Lower leg skin (tissue), 4 donors: ENCODE measurements at regions of chr1 and their contacts with region 1.

Region 1: GRCh38 chr1:182397771-182398393 is 2.6 kb downstream of the TEDDM1 start:
- DNase-seq: no peak
- H3K4me3 ChIP-seq: no peak overlapping the region
- CTCF ChIP-seq: no peak
- POLR2A ChIP-seq: no peak

Region 2: DNA sequence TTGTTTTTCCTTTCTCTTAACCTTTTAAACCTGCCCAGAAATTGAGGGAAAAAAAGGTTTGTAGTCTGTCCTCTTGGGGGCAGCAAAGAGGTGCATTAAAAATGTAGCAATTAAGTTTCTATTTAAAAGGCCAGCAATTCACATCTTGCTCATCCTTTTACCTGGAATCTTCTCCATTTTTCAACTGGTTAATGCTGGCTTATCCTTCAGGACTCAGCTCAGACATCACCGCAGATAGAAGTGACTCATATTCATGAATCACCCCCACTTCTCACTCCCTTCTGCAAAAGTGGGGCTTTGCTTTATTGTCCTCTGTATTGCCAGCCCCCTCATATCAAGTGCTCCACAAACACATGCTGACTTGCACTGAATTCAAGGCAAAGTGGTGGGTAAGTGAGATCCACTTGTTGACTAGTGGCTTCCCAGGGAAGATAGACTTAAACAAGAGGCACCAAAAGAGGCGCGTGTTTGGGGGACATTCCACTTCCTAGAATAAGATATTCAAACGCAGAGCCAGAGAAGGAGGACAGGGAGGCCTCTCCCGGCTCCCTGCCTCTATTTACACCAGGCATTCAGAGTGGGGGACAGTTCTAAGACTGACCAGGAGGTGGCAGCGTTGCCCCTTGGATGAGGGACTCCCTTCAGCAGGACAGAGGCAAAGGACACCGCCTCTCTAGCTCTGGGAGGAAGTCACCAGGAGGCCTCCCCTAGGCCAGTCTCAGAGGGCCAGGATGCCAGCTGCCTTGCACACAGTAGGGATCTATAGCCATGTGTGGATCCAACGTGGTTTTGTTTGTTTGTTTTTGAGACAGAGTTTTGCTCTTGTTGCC is 313.2 kb before region 1 on chr1:
- intact Hi-C with region 1: loop called (anchors 2 kb)
- DNase-seq: peak; percentile 92 to 98
- H3K4me3 ChIP-seq: no peak overlapping the region
- CTCF ChIP-seq: peak in 2 of 3 donors; percentile 53 to 89
- POLR2A ChIP-seq: no peak

Region 3: DNA sequence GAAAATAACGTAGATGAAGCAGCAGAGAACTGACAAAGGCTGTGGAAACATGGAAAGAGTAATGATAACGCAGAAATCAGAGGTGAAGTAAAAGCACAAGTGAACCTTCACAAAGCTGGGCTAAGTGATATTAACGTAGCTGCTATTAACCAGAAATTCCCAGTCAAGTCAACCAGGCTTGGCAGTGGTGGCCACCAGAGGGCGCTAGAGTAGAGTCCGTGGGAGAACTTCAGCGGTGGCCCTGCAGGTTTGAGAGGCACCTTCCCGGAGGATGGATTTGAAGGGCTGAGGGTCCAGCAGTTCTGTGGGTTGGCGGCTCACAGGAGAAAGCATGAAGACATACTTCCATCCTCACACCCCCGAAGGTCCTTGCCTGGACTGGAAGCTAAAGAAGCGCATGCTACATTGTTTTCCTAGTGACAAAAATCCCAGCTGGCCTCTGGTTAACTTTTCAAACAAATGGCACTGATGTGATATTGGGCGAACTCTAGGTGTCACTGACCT is 254.7 kb before region 1 on chr1:
- intact Hi-C with region 1: loop called (anchors 2 kb)
- DNase-seq: peak; percentile 95 to 99
- H3K4me3 ChIP-seq: no peak overlapping the region
- CTCF ChIP-seq: peak in 1 of 3 donors; percentile 97
- POLR2A ChIP-seq: no peak

Region 4: GRCh38 chr1:182170891-182171461 is 226.9 kb before region 1 on chr1:
- intact Hi-C with region 1: no loop called
- DNase-seq: no peak
- H3K4me3 ChIP-seq: no peak overlapping the region
- CTCF ChIP-seq: no peak
- POLR2A ChIP-seq: no peak